ENCODE measurements at regions of chr19 and their contacts with region 1.

Region 1: GRCh38 chr19:55301459-55302317 is 17.9 kb downstream of the BRSK1 start:
- DNase-seq: peak; percentile 80 to 92 (median 89)
- H3K4me3 ChIP-seq: peak overlapping the region in 1 of 4 donors; percentile 56
- H3K27ac ChIP-seq: peak overlapping the region in 3 of 5 donors; percentile 6 to 30 (median 8)
- H3K4me1 ChIP-seq: peaks cover 3 to 9% of the 10 kb centered on the region in 2 donors
- H3K27me3 ChIP-seq: no peaks in the 10 kb centered on the region
- CTCF ChIP-seq: peak; percentile 90 to 98 (median 94)
- POLR2A ChIP-seq: no peak

Region 2: DNA sequence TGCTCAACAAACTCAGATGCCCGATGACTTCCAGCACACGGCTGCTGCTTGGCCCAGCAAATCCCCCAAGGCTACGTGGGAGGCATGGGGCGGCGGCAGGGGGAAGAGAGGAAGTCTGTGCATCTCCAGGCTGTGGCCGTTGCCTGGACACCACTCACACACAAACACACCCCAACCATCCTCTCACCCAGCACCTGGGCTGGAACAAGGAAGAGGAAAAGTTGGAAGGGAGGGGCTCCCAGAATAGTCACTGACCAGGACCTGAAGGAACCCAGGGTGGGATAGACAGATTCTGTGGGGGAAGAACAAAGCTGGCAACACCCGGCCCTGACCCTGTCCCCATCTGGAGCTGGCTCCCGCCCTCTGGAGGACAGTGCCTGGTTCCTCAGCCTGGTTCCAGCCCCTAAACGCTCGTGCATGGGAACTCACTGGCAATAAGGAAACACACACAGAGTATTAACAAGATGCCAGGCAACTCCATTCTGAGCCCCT is 54.0 kb before region 1 on chr19:
- intact Hi-C with region 1: no loop called
- DNase-seq: peak in 3 of 7 donors; percentile 13 to 78 (median 17)
- H3K4me3 ChIP-seq: no peak overlapping the region
- H3K27ac ChIP-seq: peak overlapping the region in 2 of 5 donors; percentile 8 to 66
- H3K4me1 ChIP-seq: peaks cover 7 to 43% of the 10 kb centered on the region in 2 donors
- H3K27me3 ChIP-seq: no peaks in the 10 kb centered on the region
- CTCF ChIP-seq: no peak
- POLR2A ChIP-seq: no peak

Region 3: DNA sequence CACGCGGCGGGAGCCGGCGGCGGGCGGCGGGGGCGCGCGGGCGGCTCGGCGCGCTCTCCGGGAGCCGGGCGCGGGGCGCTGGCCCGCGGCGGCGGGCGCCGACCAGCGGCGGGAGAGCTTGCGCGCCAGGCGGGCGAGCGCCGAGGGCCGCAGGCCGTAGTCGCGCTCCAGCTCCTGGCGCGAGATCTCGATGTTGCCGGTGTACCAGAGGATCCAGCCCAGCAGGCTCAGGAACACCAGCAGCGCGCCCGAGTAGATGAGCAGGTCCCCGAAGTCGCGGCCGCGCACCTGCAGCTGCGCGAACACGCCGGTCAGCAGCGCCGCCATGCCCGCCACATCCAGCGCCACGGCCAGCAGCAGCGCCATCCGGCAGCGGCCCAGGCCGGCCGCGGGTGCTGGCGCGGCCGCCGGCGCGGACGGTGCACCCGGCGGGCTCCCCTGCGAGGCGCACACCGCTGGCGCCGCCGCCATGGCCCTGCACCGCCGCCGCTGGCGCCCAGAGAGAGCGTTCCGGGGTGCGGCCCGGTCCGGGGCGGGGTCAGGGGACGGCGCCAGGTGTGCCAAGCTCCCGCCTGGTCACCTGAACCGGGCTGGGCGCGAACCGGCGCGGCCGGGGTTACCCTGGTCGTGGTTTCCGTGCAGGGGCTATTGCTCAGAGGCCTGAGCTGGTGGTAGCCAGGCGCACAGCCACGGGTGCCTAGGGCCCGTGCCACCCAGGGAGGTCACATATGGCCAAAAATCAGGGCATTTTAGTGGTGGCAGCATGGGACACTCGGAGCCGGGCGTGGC is 82.3 kb after region 1 on chr19 and contains the start of gene TMEM238:
- intact Hi-C with region 1: loop called in 1 of 2 experiments (anchors 5 kb)
- DNase-seq: peak; percentile 49 to 84 (median 71)
- H3K4me3 ChIP-seq: peak within 1 kb of the TSS in 1 of 4 donors; percentile 85
- H3K27ac ChIP-seq: peak within 1 kb of the TSS; percentile 71 to 96 (median 87)
- H3K4me1 ChIP-seq: peaks cover 30 to 38% of the 10 kb centered on the region in 2 donors
- H3K27me3 ChIP-seq: no peaks in the 10 kb centered on the region
- CTCF ChIP-seq: peak in 2 of 6 experiments; percentile 20 to 38
- POLR2A ChIP-seq: peak; percentile 45 to 67
- total RNA-seq, gene TMEM238: 0.28 to 9.3 (median 2.9) TPM

Region 4: GRCh38 chr19:55418185-55418584 is 116.5 kb after region 1 on chr19:
- intact Hi-C with region 1: loop called in 1 of 2 experiments (anchors 10 kb)
- DNase-seq: peak; percentile 67 to 82 (median 76)
- H3K4me3 ChIP-seq: no peak overlapping the region
- H3K27ac ChIP-seq: no peak overlapping the region
- H3K4me1 ChIP-seq: no peaks in the 10 kb centered on the region
- H3K27me3 ChIP-seq: no peaks in the 10 kb centered on the region
- CTCF ChIP-seq: peak; percentile 69 to 86 (median 76)
- POLR2A ChIP-seq: no peak

Region 5: GRCh38 chr19:55452749-55453346 is 151.2 kb after region 1 on chr19:
- intact Hi-C with region 1: no loop called
- DNase-seq: peak; percentile 65 to 94 (median 87)
- H3K4me3 ChIP-seq: peak overlapping the region in 1 of 4 donors; percentile 44
- H3K27ac ChIP-seq: no peak overlapping the region
- H3K4me1 ChIP-seq: peaks cover 11% of the 10 kb centered on the region in 2 donors
- H3K27me3 ChIP-seq: peaks cover 21% of the 10 kb centered on the region
- CTCF ChIP-seq: peak in 1 of 6 experiments; percentile 17
- POLR2A ChIP-seq: no peak

Measured in adrenal gland (tissue), 19 donors.